Activated CD4-positive, alpha-beta T cell treated with anti-CD3 and anti-CD28 coated beads, Interleukin-2, amount 10 ng/mL, durations not matched to agents 7 days and 5 days (primary cell): ENCODE measurements at regions of chr3 and their contacts with region 1.

Region 1: GRCh38 chr3:45929042-45929679 is 14.1 kb upstream of the CXCR6 start:
- DNase-seq: peak; percentile 68
- H3K4me3 Mint-ChIP-seq: no peak overlapping the region
- H3K27ac Mint-ChIP-seq: no peak overlapping the region
- H3K4me1 Mint-ChIP-seq: no peaks in the 10 kb centered on the region
- H3K27me3 Mint-ChIP-seq: no peaks in the 10 kb centered on the region

Region 2: GRCh38 chr3:45528429-45528828 is 400.7 kb before region 1 on chr3:
- CTCF ChIA-PET with region 1: no interaction called
- POLR2A ChIA-PET with region 1: no interaction called
- DNase-seq: no peak
- H3K4me3 Mint-ChIP-seq: no peak overlapping the region
- H3K27ac Mint-ChIP-seq: no peak overlapping the region
- H3K4me1 Mint-ChIP-seq: peaks cover 5% of the 10 kb centered on the region
- H3K27me3 Mint-ChIP-seq: no peaks in the 10 kb centered on the region

Region 3: GRCh38 chr3:45760878-45761711 is 168.1 kb before region 1 on chr3:
- CTCF ChIA-PET with region 1: interaction called, 10 read pairs
- POLR2A ChIA-PET with region 1: no interaction called
- DNase-seq: peak; percentile 35
- H3K4me3 Mint-ChIP-seq: no peak overlapping the region
- H3K27ac Mint-ChIP-seq: no peak overlapping the region
- H3K4me1 Mint-ChIP-seq: no peaks in the 10 kb centered on the region
- H3K27me3 Mint-ChIP-seq: peaks cover 12% of the 10 kb centered on the region

Region 4: DNA sequence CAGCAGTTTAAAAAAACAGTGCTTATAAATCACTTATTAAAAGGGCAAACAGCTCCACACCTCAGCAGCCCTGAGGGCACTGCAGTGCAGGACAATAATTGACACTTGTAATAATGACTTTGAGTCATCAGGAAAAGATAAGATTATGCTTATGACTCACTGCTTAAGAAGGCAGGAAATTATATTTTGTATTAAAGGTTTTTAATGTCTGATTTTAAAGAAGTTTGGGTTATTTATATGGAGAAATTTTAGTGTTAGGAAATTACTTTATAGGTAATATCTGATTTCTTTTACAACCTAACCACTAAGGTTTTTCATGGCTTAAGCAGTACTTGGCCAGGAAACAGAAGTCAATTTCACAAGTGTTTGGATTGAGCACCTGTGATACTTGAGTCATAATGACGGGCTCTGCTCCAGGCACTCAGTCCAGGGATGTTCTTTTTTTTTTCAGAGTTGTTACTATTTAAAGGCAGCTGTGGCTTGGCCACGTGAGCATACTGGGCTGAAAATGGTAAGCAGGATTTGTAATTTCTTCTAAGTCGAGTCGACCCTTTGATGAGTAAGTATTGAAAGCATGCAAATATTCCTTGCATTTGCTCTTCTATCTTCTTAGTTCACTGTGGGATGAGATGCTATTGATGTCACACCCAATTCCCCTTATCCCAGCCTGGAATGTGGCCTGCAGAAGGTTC is 111.2 kb before region 1 on chr3:
- CTCF ChIA-PET with region 1: no interaction called
- POLR2A ChIA-PET with region 1: no interaction called
- DNase-seq: no peak
- H3K4me3 Mint-ChIP-seq: no peak overlapping the region
- H3K27ac Mint-ChIP-seq: no peak overlapping the region
- H3K4me1 Mint-ChIP-seq: no peaks in the 10 kb centered on the region
- H3K27me3 Mint-ChIP-seq: peaks cover 3% of the 10 kb centered on the region

Region 5: GRCh38 chr3:45890405-45890804 is 38.8 kb before region 1 on chr3:
- CTCF ChIA-PET with region 1: no interaction called
- POLR2A ChIA-PET with region 1: no interaction called
- DNase-seq: no peak
- H3K4me3 Mint-ChIP-seq: no peak overlapping the region
- H3K27ac Mint-ChIP-seq: no peak overlapping the region
- H3K4me1 Mint-ChIP-seq: peaks cover 12% of the 10 kb centered on the region
- H3K27me3 Mint-ChIP-seq: peaks cover 68% of the 10 kb centered on the region

Region 6: DNA sequence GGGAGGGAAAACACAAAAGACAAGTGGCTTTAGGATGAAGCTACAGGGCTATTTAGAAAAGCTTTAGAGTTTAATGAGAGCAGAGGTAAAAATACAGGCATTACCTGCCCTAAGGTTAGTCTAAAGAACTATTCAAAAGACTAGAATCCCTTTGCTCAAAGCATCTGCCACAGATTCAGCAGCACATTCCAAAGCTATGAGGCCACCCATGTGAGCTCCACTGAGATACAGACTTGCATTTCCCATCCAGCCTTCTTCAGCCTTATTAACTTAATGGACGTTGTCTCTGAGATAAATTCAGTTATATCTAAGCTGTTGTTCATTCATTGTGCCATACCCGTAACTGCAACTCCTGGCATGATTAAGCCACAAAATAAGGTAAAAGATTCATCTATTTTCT is 39.5 kb after region 1 on chr3:
- CTCF ChIA-PET with region 1: no interaction called
- POLR2A ChIA-PET with region 1: no interaction called
- DNase-seq: no peak
- H3K4me3 Mint-ChIP-seq: no peak overlapping the region
- H3K27ac Mint-ChIP-seq: peak overlapping the region; percentile 64
- H3K4me1 Mint-ChIP-seq: peaks cover 64% of the 10 kb centered on the region
- H3K27me3 Mint-ChIP-seq: no peaks in the 10 kb centered on the region